ENCODE measurements at regions of chr9 and their contacts with region 1.

Region 1: GRCh38 chr9:91193658-91194391 is 167.9 kb downstream of the AUH start:
- DNase-seq: peak; percentile 48 to 90 (median 68)
- ATAC-seq: peak; percentile 68
- H3K4me3 ChIP-seq: peak overlapping the region; percentile 75
- H3K4me3 Mint-ChIP-seq: peak overlapping the region; percentile 77 to 94 (median 90)
- H3K27ac ChIP-seq: peak overlapping the region; percentile 30
- H3K27ac Mint-ChIP-seq: peak overlapping the region; percentile 76 to 99 (median 92)
- H3K4me1 ChIP-seq: peaks cover 20% of the 10 kb centered on the region in 2 donors
- H3K4me1 Mint-ChIP-seq: peaks cover 6 to 80% (median 34%) of the 10 kb centered on the region in 7 donors
- H3K27me3 ChIP-seq: no peaks in the 10 kb centered on the region
- H3K27me3 Mint-ChIP-seq: no peaks in the 10 kb centered on the region

Region 2: DNA sequence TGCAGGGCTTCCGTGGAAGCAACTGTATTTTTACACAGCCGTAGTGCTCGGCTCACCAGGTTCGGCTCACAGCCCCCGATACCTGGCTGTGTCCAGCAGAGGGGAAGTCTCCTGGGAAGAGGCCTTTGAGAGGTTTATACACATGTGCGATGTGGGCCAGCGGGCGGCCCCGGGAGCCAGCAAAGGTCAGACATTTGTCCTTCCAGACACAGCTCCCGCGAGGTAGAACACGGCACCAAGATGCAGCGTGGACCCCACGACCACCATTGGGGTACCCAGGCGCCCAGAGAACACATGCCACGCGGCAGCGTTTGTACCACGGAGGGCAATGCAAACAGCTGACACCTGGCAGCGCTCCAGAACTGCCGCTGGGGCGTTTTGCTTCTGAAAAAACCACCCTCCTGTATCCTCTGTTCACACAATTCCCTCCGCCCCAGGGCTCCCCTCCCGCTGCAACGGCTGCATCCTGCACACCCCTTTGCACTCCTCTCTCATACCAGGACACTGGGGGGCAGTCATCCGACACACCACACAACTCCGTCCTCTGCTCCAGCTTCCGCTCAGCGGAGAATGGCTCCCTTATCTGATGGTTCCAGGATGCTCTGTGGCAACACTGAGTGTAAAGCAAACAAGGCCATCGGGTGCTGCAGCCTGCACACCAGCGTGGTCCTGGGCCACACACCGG is 156.9 kb before region 1 on chr9:
- CTCF ChIA-PET with region 1: no interaction called
- POLR2A ChIA-PET with region 1: no interaction called
- intact Hi-C with region 1: loop called in 1 of 2 experiments (anchors 1 kb)
- DNase-seq: peak; percentile 31 to 69 (median 54)
- ATAC-seq: peak; percentile 88
- H3K4me3 ChIP-seq: no peak overlapping the region
- H3K4me3 Mint-ChIP-seq: peak overlapping the region in 9 of 10 donors; percentile 13 to 73 (median 37)
- H3K27ac ChIP-seq: no peak overlapping the region
- H3K27ac Mint-ChIP-seq: peak overlapping the region in 5 of 9 donors; percentile 13 to 38 (median 26)
- H3K4me1 ChIP-seq: peaks cover 8 to 11% of the 10 kb centered on the region in 2 donors
- H3K4me1 Mint-ChIP-seq: peaks cover 10 to 65% (median 11%) of the 10 kb centered on the region in 7 donors
- H3K27me3 ChIP-seq: no peaks in the 10 kb centered on the region
- H3K27me3 Mint-ChIP-seq: peaks cover 0 to 34% (median 14%) of the 10 kb centered on the region in 5 donors

Region 3: GRCh38 chr9:91131433-91131839 is 62.4 kb before region 1 on chr9:
- CTCF ChIA-PET with region 1: no interaction called
- POLR2A ChIA-PET with region 1: no interaction called
- intact Hi-C with region 1: loop called in 1 of 2 experiments (anchors 1 kb)
- DNase-seq: peak in 1 of 9 donors; percentile 72
- ATAC-seq: peak; percentile 85
- H3K4me3 ChIP-seq: no peak overlapping the region
- H3K4me3 Mint-ChIP-seq: peak overlapping the region in 1 of 10 donors; percentile 67
- H3K27ac ChIP-seq: no peak overlapping the region
- H3K27ac Mint-ChIP-seq: peak overlapping the region in 2 of 9 donors; percentile 31 to 95
- H3K4me1 ChIP-seq: peaks cover 0 to 6% of the 10 kb centered on the region in 2 donors
- H3K4me1 Mint-ChIP-seq: peaks cover 0 to 51% (median 4%) of the 10 kb centered on the region in 7 donors
- H3K27me3 ChIP-seq: no peaks in the 10 kb centered on the region
- H3K27me3 Mint-ChIP-seq: no peaks in the 10 kb centered on the region

Region 4: DNA sequence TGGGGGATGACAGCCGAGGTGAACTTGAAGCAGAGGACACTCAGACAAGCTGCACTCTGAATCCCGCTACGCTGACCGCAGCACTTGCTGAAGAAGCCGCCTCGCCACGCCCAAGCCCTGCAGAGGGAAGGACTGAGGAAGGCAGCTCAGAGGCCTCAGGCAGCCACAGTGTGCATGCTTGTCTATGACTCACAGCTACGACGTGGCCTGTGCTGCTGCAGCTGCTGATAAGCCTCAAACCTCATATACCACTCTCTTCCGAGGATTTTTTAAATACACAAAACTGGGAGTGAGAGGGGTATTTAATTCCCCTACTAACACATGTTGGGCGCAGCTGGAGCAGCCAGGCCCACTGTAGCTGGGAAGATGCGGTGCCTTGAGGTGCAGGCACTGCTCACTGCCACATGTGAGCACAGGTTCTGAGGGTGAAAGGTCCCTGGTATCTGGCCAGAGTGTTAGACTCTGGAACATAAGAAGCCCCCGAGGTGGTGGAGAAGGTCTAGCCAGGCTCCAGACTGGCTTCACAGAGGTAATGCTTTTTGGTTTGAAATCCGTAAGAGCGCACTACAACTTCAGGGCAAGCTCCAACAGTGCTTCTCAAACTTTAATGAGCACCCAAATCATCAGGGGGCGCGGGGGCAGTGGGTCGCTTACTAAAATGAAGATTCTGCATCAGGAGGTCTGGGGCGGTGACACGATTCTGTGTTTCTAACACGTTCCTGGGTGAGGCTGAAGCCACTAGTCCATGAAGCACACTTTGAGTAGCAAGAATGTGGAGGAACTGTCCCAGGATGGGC is 28.9 kb before region 1 on chr9:
- CTCF ChIA-PET with region 1: no interaction called
- POLR2A ChIA-PET with region 1: no interaction called
- intact Hi-C with region 1: loop called in 1 of 2 experiments (anchors 1 kb)
- DNase-seq: peak in 1 of 9 donors; percentile 78
- ATAC-seq: peak; percentile 90
- H3K4me3 ChIP-seq: no peak overlapping the region
- H3K4me3 Mint-ChIP-seq: peak overlapping the region in 2 of 10 donors; percentile 6 to 89
- H3K27ac ChIP-seq: no peak overlapping the region
- H3K27ac Mint-ChIP-seq: peak overlapping the region in 2 of 9 donors; percentile 72 to 97
- H3K4me1 ChIP-seq: peaks cover 15 to 38% of the 10 kb centered on the region in 2 donors
- H3K4me1 Mint-ChIP-seq: peaks cover 13 to 63% (median 35%) of the 10 kb centered on the region in 7 donors
- H3K27me3 ChIP-seq: no peaks in the 10 kb centered on the region
- H3K27me3 Mint-ChIP-seq: no peaks in the 10 kb centered on the region

Region 5: DNA sequence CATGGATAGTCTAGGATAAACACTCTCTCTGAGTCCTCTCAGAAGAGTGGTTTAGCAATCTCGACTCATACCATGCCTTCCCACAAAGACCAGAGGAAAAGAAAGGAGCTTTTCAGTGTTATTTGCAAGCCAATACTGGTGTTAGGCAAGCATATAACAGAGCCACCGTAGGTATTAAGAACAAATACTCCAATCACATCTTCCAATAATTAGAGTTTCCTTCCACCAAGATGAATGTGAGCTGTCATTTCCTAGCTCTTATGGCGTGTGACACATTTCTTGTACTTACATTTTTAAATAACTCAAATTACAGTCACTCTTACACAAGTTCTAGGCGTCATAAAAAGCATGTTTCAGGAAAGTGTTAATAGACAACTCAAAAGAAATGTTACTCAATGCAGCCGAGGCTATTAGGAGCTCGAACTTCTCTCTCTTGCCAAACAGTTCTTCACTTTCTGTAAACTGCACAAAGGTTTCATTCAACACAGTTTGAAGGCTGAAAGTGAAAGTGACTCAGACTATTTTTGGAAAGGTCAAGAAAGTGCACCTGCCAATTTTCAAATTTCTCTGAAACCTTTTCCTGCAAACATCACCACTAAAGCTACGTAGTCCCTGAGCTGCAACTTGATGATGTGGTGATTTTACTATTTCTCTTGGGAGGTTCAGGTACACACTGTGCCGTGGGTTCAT is 14.0 kb after region 1 on chr9:
- CTCF ChIA-PET with region 1: no interaction called
- POLR2A ChIA-PET with region 1: no interaction called
- intact Hi-C with region 1: loop called (anchors 1 kb)
- DNase-seq: peak in 5 of 9 donors; percentile 13 to 24 (median 21)
- ATAC-seq: peak; percentile 74
- H3K4me3 ChIP-seq: peak overlapping the region; percentile 4
- H3K4me3 Mint-ChIP-seq: peak overlapping the region; percentile 49 to 89 (median 80)
- H3K27ac ChIP-seq: peak overlapping the region; percentile 31
- H3K27ac Mint-ChIP-seq: peak overlapping the region; percentile 52 to 91 (median 83)
- H3K4me1 ChIP-seq: peaks cover 17 to 18% of the 10 kb centered on the region in 2 donors
- H3K4me1 Mint-ChIP-seq: peaks cover 13 to 61% (median 37%) of the 10 kb centered on the region in 7 donors
- H3K27me3 ChIP-seq: no peaks in the 10 kb centered on the region
- H3K27me3 Mint-ChIP-seq: no peaks in the 10 kb centered on the region

Region 6: DNA sequence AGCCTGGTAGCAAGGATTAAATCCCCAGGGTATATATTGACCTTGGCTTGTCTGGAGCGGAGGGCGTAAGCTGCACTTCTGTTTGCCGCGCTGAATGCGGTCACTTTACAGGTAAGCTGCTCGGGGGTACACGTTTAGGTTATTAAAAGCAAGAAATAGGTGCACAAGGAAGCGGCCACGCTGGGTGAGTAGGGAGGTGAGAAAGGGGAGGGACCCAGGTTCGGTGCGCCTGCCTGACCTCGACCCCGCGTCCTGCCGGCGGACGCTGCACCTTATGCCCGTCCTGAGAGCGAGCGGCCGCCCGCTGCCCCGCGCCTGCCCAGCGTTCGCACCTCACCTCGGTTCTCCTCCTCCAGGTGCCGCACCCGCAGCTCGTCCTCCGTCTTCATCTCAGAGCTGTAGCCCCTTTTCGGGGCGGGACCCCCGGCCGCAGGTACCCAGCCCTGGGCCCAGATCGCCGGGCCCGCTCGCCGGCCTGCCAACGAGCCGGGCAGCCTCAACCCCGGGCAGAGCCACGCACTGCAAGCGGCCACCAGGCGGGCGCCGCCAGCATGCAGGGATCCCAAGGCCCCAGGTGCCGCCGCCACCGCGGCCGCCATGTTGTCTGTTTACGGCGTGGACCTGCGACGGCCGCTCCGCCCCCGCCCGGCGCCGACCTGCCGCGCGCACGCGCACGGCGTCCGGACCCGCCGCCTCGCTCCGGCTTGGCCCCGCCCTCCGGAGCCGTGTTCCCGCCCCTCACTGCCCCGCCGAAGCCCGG is 167.6 kb after region 1 on chr9 and contains the start of gene AUH:
- CTCF ChIA-PET with region 1: no interaction called
- POLR2A ChIA-PET with region 1: interaction called, 4 read pairs
- intact Hi-C with region 1: loop called (anchors 1 kb)
- DNase-seq: peak; percentile 77 to 94 (median 87)
- ATAC-seq: peak; percentile 98
- H3K4me3 ChIP-seq: peak within 1 kb of the TSS; percentile 82
- H3K4me3 Mint-ChIP-seq: peak within 1 kb of the TSS; percentile 89 to 99 (median 98)
- H3K27ac ChIP-seq: peak within 1 kb of the TSS; percentile 82
- H3K27ac Mint-ChIP-seq: peak within 1 kb of the TSS; percentile 93 to 98 (median 96)
- H3K4me1 ChIP-seq: peaks cover 9 to 18% of the 10 kb centered on the region in 2 donors
- H3K4me1 Mint-ChIP-seq: peaks cover 38 to 59% (median 54%) of the 10 kb centered on the region in 7 donors
- H3K27me3 ChIP-seq: no peaks in the 10 kb centered on the region
- H3K27me3 Mint-ChIP-seq: no peaks in the 10 kb centered on the region
- total RNA-seq, gene AUH: 17.2 to 30.1 (median 25.9) TPM

Measured in naive thymus-derived CD4-positive, alpha-beta T cell (primary cell).